Thyroid gland (tissue), 4 donors: ENCODE measurements at regions of chr14 and their contacts with region 1.

Region 1: GRCh38 chr14:68692916-68693771 is 99.7 kb downstream of the ZFP36L1 start:
- DNase-seq: no peak
- H3K4me3 ChIP-seq: no peak overlapping the region
- H3K27ac ChIP-seq: peak overlapping the region in 1 of 3 donors; percentile 28
- H3K4me1 ChIP-seq: peaks cover 8 to 38% of the 10 kb centered on the region in 2 donors
- H3K27me3 ChIP-seq: no peaks in the 10 kb centered on the region
- CTCF ChIP-seq: no peak
- POLR2A ChIP-seq: no peak

Region 2: GRCh38 chr14:68487805-68488590 is 205.1 kb before region 1 on chr14:
- intact Hi-C with region 1: no loop called
- DNase-seq: no peak
- H3K4me3 ChIP-seq: no peak overlapping the region
- H3K27ac ChIP-seq: no peak overlapping the region
- H3K4me1 ChIP-seq: peaks cover 0 to 11% of the 10 kb centered on the region in 2 donors
- H3K27me3 ChIP-seq: no peaks in the 10 kb centered on the region
- CTCF ChIP-seq: no peak
- POLR2A ChIP-seq: no peak

Region 3: DNA sequence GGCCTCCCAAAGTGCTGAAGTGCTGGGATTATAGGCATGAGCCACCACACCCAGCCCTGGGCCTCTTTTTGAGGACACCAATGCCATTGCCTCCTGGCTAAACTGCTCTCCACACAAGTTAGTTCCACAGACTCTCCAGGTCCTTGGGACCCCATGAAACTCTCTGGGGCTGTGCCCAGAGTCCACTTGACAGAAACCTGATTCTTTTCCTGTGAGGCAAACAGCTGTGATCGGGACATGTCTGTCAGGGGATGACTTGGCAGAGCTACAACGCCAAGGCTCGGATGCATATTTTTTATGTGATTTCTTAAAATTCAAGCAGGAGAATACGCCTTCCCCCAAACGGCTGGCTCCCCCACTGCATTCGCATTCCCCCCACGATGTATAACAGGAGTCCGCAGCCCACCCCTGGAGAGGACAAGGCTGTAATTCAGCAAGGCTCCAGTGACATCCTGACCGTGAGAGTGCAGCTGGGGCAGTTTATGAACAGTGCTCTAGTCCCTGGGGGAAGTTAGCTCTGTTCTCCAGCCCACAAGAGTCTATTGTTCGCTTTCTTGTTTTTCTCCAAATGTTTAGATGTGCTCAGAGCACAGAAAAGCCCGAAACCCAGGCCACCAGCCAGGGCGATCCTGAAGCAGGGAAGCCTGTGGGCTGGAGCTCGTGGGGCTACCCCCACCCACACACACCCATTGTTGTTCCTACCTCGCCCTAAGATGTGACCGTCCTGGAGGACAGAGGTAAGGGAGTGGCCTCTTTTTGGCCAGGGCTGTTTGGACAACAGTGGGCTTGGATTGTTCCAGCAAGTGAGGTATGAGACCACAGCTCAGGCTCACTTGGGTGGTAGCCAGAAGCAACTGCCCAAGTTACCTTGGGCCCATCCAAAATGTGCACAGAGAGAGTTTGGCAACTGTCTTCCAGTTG is 59.8 kb before region 1 on chr14:
- intact Hi-C with region 1: no loop called
- DNase-seq: peak; percentile 50 to 59
- H3K4me3 ChIP-seq: no peak overlapping the region
- H3K27ac ChIP-seq: peak overlapping the region; percentile 87 to 98 (median 95)
- H3K4me1 ChIP-seq: peaks cover 73 to 76% of the 10 kb centered on the region in 2 donors
- H3K27me3 ChIP-seq: no peaks in the 10 kb centered on the region
- CTCF ChIP-seq: no peak
- POLR2A ChIP-seq: no peak

Region 4: GRCh38 chr14:68780358-68781160 is 87.4 kb after region 1 on chr14:
- intact Hi-C with region 1: loop called (anchors 5 kb)
- DNase-seq: peak in 1 of 2 donors; percentile 26
- H3K4me3 ChIP-seq: no peak overlapping the region
- H3K27ac ChIP-seq: peak overlapping the region in 2 of 3 donors; percentile 37 to 44
- H3K4me1 ChIP-seq: peaks cover 0 to 37% of the 10 kb centered on the region in 2 donors
- H3K27me3 ChIP-seq: no peaks in the 10 kb centered on the region
- CTCF ChIP-seq: no peak
- POLR2A ChIP-seq: no peak